ENCODE measurements at regions of chr11 and their contacts with region 1.

Region 1: DNA sequence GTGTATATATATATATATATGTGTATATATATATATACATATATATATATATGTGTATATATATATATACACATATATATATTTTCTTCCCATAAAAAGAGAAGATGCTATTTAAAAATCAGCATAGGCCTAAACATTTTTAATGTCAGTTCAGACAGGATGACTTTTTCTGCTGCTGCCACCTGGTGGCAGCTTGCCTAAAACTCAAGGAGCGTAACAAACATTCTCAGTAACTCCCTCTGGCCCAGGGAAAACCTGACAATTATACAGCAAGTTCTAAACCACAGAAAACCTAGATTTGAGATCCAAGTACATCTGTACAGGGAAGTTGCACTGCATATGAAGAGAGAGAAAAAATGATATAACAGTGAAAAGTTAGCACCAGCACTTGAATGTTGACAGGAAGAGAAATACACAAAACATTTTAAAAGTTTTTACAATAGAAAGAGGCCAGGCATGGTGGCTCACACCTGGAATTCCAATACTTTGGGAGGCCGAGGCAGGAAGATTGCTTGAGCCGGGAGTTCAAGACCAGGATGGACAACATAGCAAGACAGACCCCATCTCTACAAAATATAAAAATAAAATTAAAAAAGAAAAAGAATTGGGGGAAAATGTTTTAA is 16.6 kb downstream of the OR8A1 start:
- DNase-seq: peak; percentile 59 to 73
- H3K4me3 ChIP-seq: no peak overlapping the region
- H3K4me3 Mint-ChIP-seq: no peak overlapping the region
- H3K27ac Mint-ChIP-seq: no peak overlapping the region
- H3K4me1 ChIP-seq: no peaks in the 10 kb centered on the region
- H3K4me1 Mint-ChIP-seq: no peaks in the 10 kb centered on the region
- H3K27me3 ChIP-seq: peaks cover 2% of the 10 kb centered on the region
- H3K27me3 Mint-ChIP-seq: peaks cover 32% of the 10 kb centered on the region
- CTCF ChIP-seq: peak; percentile 79 to 91

Region 2: DNA sequence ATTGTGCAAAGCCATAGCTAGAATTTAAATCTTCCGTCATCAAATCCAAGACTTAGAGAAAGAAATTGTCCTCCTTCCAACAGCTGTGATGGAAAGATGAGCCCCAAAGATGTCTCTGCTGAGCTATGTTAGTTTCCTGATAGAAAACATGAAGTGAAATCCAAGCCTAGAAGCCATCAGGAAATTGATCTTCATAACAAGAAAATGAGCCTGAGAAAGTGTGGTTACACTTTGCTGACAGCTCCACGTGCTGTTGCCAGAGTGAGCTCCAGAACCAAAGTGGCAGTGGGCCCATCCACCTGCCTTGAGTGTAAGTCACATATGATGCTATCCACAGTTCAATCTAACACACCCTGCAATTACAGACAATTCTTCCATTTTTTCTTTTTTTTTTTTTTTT is 1988.8 kb before region 1 on chr11:
- CTCF ChIA-PET with region 1: interaction called, 11 read pairs
- POLR2A ChIA-PET with region 1: no interaction called
- intact Hi-C with region 1: no loop called
- DNase-seq: no peak
- H3K4me3 ChIP-seq: no peak overlapping the region
- H3K4me3 Mint-ChIP-seq: no peak overlapping the region
- H3K27ac Mint-ChIP-seq: no peak overlapping the region
- H3K4me1 ChIP-seq: peaks cover 8% of the 10 kb centered on the region; the same call in 1 of the 2 replicates
- H3K4me1 Mint-ChIP-seq: no peaks in the 10 kb centered on the region
- H3K27me3 ChIP-seq: no peaks in the 10 kb centered on the region
- H3K27me3 Mint-ChIP-seq: peaks cover 22% of the 10 kb centered on the region
- CTCF ChIP-seq: no peak

Region 3: DNA sequence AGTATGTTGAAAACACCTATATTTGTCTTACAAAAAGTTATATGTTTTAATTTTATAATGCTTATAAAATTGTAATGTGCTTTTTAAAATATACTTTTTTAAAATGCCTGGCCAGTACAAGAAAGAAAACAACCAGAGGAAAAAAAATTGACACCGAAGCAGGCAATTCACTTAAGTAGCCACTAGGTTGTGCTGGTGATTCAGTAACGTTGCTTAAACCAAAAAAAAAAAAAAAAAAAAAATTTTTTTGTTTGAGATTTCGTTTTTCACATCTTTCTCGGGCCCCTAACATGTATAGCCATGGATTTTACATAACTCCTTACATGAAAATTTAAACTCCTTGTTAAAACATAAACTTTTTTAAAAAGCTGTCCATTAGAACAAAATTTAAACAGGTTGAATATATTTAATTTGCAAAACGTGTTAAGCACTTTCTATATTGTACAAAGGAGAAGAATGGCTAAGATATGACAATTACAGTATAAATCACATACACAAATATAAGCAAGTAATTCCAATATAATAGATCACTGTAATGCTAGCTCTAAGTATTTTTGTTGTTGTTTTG is 170.9 kb before region 1 on chr11:
- CTCF ChIA-PET with region 1: no interaction called
- POLR2A ChIA-PET with region 1: no interaction called
- intact Hi-C with region 1: loop called (anchors 1 kb)
- DNase-seq: no peak
- H3K4me3 ChIP-seq: no peak overlapping the region
- H3K4me3 Mint-ChIP-seq: no peak overlapping the region
- H3K27ac Mint-ChIP-seq: no peak overlapping the region
- H3K4me1 ChIP-seq: peaks cover 4% of the 10 kb centered on the region
- H3K4me1 Mint-ChIP-seq: peaks cover 1% of the 10 kb centered on the region
- H3K27me3 ChIP-seq: no peaks in the 10 kb centered on the region; the same call in 1 of the 2 replicates
- H3K27me3 Mint-ChIP-seq: peaks cover 11% of the 10 kb centered on the region
- CTCF ChIP-seq: peak; percentile 60 to 62

Region 4: GRCh38 chr11:124536520-124536919 is 49.8 kb before region 1 on chr11:
- CTCF ChIA-PET with region 1: no interaction called
- POLR2A ChIA-PET with region 1: no interaction called
- intact Hi-C with region 1: loop called (anchors 2 kb)
- DNase-seq: peak; percentile 66 to 80
- H3K4me3 ChIP-seq: no peak overlapping the region
- H3K4me3 Mint-ChIP-seq: no peak overlapping the region
- H3K27ac Mint-ChIP-seq: no peak overlapping the region
- H3K4me1 ChIP-seq: no peaks in the 10 kb centered on the region
- H3K4me1 Mint-ChIP-seq: no peaks in the 10 kb centered on the region
- H3K27me3 ChIP-seq: no peaks in the 10 kb centered on the region
- H3K27me3 Mint-ChIP-seq: peaks cover 23% of the 10 kb centered on the region
- CTCF ChIP-seq: no peak